ENCODE measurements at regions of chr7 and their contacts with region 1.

Region 1: GRCh38 chr7:44565097-44565794 is 8.5 kb downstream of the DDX56 start:
- DNase-seq: peak; percentile 43 to 64 (median 54)
- H3K4me3 ChIP-seq: no peak overlapping the region
- H3K27ac ChIP-seq: peak overlapping the region in 1 of 2 experiments; percentile 58
- H3K4me1 ChIP-seq: peaks cover 0 to 9% (median 0%) of the 10 kb centered on the region in 4 experiments
- H3K27me3 ChIP-seq: no peaks in the 10 kb centered on the region

Region 2: DNA sequence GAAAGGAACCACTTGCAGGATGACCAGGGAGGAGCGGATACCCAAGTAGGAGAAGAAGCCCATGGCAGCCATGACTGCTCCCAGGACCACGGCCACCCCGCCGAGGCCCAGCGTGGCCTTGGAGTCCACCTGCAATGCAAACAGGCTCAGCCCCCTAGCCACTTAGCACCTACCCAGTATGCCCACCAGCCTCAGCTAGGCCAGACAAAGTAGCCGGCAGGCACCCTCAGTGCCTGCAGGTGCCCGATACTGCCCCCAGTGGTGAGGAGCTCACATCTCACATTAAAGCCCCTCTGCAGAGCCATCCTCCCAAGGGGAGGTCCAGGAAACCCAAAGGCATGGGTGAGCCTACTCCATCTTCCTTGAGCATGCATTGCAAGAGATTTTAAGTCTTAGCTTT is 30.7 kb before region 1 on chr7:
- CTCF ChIA-PET with region 1: interaction called, 14 read pairs
- POLR2A ChIA-PET with region 1: interaction called, 3 read pairs
- DNase-seq: peak; percentile 22 to 63 (median 61)
- H3K4me3 ChIP-seq: no peak overlapping the region
- H3K27ac ChIP-seq: no peak overlapping the region
- H3K4me1 ChIP-seq: no peaks in the 10 kb centered on the region
- H3K27me3 ChIP-seq: no peaks in the 10 kb centered on the region

Region 3: DNA sequence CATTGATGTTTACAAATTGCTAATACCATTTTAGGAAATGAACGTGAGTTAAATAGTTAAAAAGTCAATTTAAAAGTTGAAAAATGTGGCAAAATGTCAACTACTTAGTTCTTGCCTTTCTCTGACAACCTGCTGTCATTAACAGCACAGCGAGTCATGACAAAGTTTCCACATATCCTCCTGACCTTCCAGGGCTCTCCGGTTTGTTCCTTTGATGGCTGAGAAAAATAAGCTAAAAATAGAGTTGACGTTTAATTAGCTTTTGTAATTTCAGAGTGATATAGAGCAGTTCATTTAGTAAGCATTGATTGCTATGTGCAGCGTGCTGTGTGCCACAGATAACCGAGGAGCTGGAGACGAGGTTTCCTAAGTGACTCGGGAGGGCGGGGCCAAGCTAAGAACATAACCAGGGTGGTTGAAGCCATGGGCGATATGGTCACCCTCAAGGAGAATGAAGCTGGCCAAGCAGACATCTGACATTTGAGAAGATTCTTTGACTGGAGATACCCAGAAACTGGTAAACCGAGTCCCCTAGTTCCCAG is 89.1 kb after region 1 on chr7:
- CTCF ChIA-PET with region 1: no interaction called
- POLR2A ChIA-PET with region 1: no interaction called
- DNase-seq: no peak
- H3K4me3 ChIP-seq: no peak overlapping the region
- H3K27ac ChIP-seq: no peak overlapping the region
- H3K4me1 ChIP-seq: no peaks in the 10 kb centered on the region
- H3K27me3 ChIP-seq: no peaks in the 10 kb centered on the region

Region 4: DNA sequence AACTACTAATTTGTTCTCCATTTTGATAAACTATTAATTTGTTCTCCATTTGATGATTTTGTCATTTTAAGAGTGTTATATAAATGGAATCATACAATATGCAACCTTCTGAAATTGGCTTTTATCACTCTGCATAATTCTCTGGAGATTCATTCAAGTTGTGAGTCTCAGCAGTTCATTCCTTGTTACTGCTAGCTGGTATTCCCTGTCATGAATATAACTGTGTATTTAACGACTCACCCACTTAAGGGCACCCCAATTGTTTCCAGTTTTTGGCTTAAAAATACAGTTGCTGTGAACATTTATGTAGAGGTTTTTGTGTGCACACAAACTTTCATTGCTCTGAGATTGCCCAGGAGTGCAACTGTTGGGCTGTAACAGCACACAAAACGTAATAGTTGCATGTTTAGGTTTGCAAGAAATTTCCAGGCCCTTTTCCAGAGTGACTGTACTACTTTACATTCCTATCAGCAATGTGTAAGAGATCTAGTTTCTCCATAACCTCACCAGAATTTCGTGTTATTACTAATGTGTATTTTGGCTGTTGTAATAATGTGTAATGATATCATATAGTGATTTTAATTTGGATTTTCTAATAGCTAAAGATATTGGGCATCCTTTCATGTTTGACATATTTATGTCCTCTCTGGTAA is 855.7 kb after region 1 on chr7:
- CTCF ChIA-PET with region 1: no interaction called
- POLR2A ChIA-PET with region 1: no interaction called
- DNase-seq: no peak
- H3K4me3 ChIP-seq: no peak overlapping the region
- H3K27ac ChIP-seq: no peak overlapping the region
- H3K4me1 ChIP-seq: no peaks in the 10 kb centered on the region
- H3K27me3 ChIP-seq: no peaks in the 10 kb centered on the region

Measured in common myeloid progenitor, CD34-positive (primary cell).